ENCODE measurements at regions of chr2 and their contacts with region 1.

Region 1: DNA sequence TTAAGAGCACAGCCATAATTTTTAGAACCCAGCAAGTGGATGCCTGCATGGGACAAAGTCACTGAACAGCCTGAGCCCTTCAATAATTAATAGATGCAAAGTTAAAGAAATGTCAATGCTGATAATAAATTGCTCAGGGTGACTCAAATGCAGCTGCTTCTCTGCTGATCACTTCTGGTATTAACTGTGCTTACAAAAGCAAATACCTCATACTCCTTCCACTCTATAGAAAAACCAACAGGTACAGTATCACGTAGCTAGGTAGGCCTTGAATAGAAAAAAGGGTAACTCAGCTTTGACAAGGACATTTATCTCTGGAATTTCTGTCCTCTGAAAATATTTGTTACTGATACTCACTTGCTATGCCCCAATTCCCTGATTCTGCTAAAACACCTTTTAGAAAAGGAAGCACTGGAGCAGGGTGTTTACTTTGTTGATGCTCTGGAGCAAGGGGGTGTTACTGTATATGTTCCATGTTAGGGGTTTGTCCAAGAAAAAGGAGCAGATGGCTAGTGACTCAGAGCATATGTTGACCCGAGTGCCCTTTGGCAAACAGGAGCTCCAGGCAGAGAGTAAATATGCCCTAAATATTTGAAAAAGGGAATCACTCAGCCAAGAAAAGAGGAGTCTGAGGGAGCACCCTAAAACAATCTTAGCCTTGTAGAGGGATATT is 59.1 kb upstream of the RTN4 start:
- DNase-seq: peak; percentile 20
- H3K4me3 Mint-ChIP-seq: no peak overlapping the region
- H3K27ac Mint-ChIP-seq: peak overlapping the region; percentile 40
- H3K4me1 Mint-ChIP-seq: peaks cover 25% of the 10 kb centered on the region
- H3K27me3 Mint-ChIP-seq: no peaks in the 10 kb centered on the region
- CTCF ChIP-seq: no peak

Region 2: DNA sequence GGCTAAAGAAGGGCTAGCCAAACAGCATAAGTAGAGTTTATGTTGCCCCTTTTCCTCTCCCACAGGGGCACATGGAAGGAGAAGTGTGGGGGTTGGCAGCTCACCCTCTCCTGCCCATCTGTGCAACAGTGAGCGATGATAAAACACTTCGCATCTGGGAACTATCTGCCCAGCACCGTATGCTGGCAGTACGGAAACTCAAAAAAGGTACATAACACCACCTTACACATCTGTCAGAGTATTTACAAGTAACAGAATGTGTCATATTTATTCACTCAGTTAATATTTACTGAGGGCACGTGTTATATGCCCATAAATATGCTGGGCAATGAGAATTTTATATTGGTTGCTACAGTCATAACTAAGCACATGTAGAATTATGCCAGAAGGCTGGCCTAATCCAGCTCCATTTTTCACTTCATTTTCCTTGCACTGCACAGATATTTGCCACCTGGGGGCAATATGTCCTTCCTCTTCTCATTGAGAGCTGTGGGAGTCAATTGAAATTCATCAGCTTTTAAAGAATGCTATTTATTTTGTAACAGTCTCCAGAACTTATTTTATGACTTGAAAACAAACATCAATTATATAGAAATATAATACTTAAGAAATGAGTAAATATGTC is 209.7 kb before region 1 on chr2:
- CTCF ChIA-PET with region 1: no interaction called
- intact Hi-C with region 1: no loop called
- DNase-seq: peak; percentile 25
- H3K4me3 Mint-ChIP-seq: no peak overlapping the region
- H3K27ac Mint-ChIP-seq: no peak overlapping the region
- H3K4me1 Mint-ChIP-seq: peaks cover 33% of the 10 kb centered on the region
- H3K27me3 Mint-ChIP-seq: no peaks in the 10 kb centered on the region
- CTCF ChIP-seq: peak; percentile 61

Region 3: DNA sequence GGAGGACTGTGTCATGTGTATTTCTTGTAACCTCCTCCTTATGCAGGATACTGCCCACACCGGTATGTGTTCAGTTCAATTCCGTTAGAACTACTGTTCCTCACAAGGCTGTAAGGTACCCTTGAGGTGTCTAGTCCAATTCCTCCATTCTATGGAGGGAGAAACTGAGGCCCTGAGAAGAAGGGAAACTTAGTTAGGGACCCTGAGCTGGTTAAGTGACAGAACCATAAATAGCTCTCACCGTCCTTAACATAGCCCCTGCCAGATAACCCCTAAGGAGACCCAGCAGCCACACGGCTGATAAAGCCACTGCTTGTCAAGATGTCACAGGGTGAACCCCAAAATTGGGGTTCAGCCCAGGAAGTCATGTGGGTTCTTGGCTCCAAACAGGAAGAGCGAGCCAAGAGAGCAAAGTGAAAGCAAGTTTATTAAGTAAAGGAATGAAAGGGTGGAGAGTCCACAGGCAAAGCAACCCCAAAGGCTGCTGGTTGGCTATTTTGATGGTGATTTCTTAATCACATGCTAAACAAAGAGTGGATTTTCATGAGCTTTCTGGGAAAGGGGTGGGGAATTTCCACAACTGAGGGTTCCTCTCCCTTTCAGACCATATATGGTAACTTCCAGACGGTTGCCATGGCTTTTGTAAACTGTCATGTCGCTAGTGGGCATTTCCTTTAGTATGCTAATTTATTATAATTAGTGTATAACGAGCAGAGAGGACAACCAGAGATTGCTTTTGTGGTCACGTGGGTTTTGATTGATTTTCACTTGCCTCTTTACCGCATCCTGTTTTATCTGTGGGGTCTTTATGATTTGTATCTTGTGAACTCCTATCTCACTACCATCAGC is 24.3 kb after region 1 on chr2:
- CTCF ChIA-PET with region 1: no interaction called
- intact Hi-C with region 1: loop called (anchors 1 kb)
- DNase-seq: peak; percentile 70
- H3K4me3 Mint-ChIP-seq: peak overlapping the region; percentile 59
- H3K27ac Mint-ChIP-seq: peak overlapping the region; percentile 55
- H3K4me1 Mint-ChIP-seq: peaks cover 46% of the 10 kb centered on the region
- H3K27me3 Mint-ChIP-seq: no peaks in the 10 kb centered on the region
- CTCF ChIP-seq: no peak

Measured in Calu3 (cell line).